CD14-positive monocyte (primary cell): ENCODE measurements at regions of chr16 and their contacts with region 1.

Region 1: GRCh38 chr16:636206-637080 is at the start of gene METTL26:
- DNase-seq: peak; percentile 93
- H3K4me3 ChIP-seq: peak within 1 kb of the TSS; percentile 70 to 96 (median 89)
- H3K4me3 Mint-ChIP-seq: peak within 1 kb of the TSS; percentile 95 to 97
- H3K27ac ChIP-seq: peak within 1 kb of the TSS; percentile 87 to 95
- H3K27ac Mint-ChIP-seq: peak within 1 kb of the TSS; percentile 94 to 99 (median 98)
- H3K4me1 ChIP-seq: peaks cover 30 to 38% of the 10 kb centered on the region in 2 donors
- H3K4me1 Mint-ChIP-seq: peaks cover 14% of the 10 kb centered on the region
- H3K27me3 ChIP-seq: no peaks in the 10 kb centered on the region
- H3K27me3 Mint-ChIP-seq: peaks cover 3 to 6% (median 3%) of the 10 kb centered on the region in 3 donors
- CTCF ChIP-seq: peak; percentile 18
- polyA plus RNA-seq, gene METTL26: 57.1 to 80.9 (median 70.4) TPM

Region 2: GRCh38 chr16:527006-527753 is 109.3 kb before region 1 on chr16 and contains the start of gene CAPN15:
- intact Hi-C with region 1: loop called (anchors 5 kb)
- DNase-seq: peak; percentile 78 to 83 (median 81)
- H3K4me3 ChIP-seq: peak within 1 kb of the TSS; percentile 52 to 91 (median 76)
- H3K4me3 Mint-ChIP-seq: peak within 1 kb of the TSS; percentile 88 to 92
- H3K27ac ChIP-seq: peak within 1 kb of the TSS; percentile 60 to 92
- H3K27ac Mint-ChIP-seq: peak within 1 kb of the TSS; percentile 83 to 94 (median 86)
- H3K4me1 ChIP-seq: peaks cover 29 to 43% of the 10 kb centered on the region in 2 donors
- H3K4me1 Mint-ChIP-seq: peaks cover 39% of the 10 kb centered on the region
- H3K27me3 ChIP-seq: no peaks in the 10 kb centered on the region
- H3K27me3 Mint-ChIP-seq: peaks cover 0 to 2% (median 1%) of the 10 kb centered on the region in 3 donors
- CTCF ChIP-seq: no peak
- polyA plus RNA-seq, gene CAPN15: 3.4 to 42.6 (median 3.9) TPM

Region 3: DNA sequence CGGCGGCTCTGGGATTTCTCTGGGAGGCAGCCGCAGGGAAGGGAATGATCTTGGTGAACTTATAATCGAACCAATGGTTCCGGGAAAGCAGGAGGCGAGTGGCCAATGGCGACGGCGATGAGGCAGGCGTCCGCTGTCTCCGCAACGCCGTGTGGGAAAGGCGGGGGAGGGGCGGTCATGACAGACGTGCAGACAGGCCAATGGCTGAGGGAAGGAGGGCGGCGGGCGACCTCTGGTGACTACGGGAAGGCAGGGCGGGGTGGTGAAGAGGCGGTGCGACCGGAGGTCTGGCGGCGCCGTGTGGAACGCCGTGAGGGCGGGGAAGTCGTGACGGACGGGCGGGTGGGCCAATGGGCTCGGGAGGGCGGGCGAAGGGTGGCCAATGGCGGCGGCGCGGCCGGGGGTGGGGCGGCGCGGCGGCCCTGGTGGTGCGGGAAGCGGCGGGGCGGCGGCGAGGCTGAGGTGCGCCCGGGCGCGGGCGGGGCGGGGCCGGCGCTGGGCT is 46.7 kb before region 1 on chr16 and contains the start of gene RAB40C:
- intact Hi-C with region 1: loop called (anchors 2 kb)
- DNase-seq: peak; percentile 96 to 100 (median 99)
- H3K4me3 ChIP-seq: peak within 1 kb of the TSS; percentile 85 to 92 (median 86)
- H3K4me3 Mint-ChIP-seq: peak within 1 kb of the TSS; percentile 91 to 99
- H3K27ac ChIP-seq: peak within 1 kb of the TSS; percentile 86 to 91
- H3K27ac Mint-ChIP-seq: peak within 1 kb of the TSS; percentile 98 to 100 (median 99)
- H3K4me1 ChIP-seq: peaks cover 58 to 63% of the 10 kb centered on the region in 2 donors
- H3K4me1 Mint-ChIP-seq: peaks cover 54% of the 10 kb centered on the region
- H3K27me3 ChIP-seq: peaks cover 0 to 7% of the 10 kb centered on the region in 2 donors
- H3K27me3 Mint-ChIP-seq: peaks cover 3 to 15% (median 12%) of the 10 kb centered on the region in 3 donors
- CTCF ChIP-seq: no peak
- polyA plus RNA-seq, gene RAB40C: 10.0 to 22.6 (median 10.9) TPM

Region 4: GRCh38 chr16:660459-661183 is 24.2 kb after region 1 on chr16:
- intact Hi-C with region 1: loop called (anchors 2 kb)
- DNase-seq: peak; percentile 91 to 94 (median 93)
- H3K4me3 ChIP-seq: peak overlapping the region; percentile 4 to 65 (median 27)
- H3K4me3 Mint-ChIP-seq: peak overlapping the region; percentile 65 to 73
- H3K27ac ChIP-seq: peak overlapping the region in 1 of 2 donors; percentile 40
- H3K27ac Mint-ChIP-seq: peak overlapping the region in 3 of 7 donors; percentile 8 to 30 (median 24)
- H3K4me1 ChIP-seq: peaks cover 11 to 16% of the 10 kb centered on the region in 2 donors
- H3K4me1 Mint-ChIP-seq: peaks cover 10% of the 10 kb centered on the region
- H3K27me3 ChIP-seq: no peaks in the 10 kb centered on the region
- H3K27me3 Mint-ChIP-seq: peaks cover 0 to 3% (median 2%) of the 10 kb centered on the region in 3 donors
- CTCF ChIP-seq: peak; percentile 72

Region 5: GRCh38 chr16:684067-684794 is 47.8 kb after region 1 on chr16 and contains the start of gene JMJD8:
- intact Hi-C with region 1: loop called in 1 of 2 experiments (anchors 5 kb)
- DNase-seq: peak; percentile 94 to 97 (median 97)
- H3K4me3 ChIP-seq: peak within 1 kb of the TSS; percentile 41 to 78 (median 52)
- H3K4me3 Mint-ChIP-seq: peak within 1 kb of the TSS; percentile 73 to 79
- H3K27ac ChIP-seq: peak within 1 kb of the TSS; percentile 48 to 69
- H3K27ac Mint-ChIP-seq: peak within 1 kb of the TSS; percentile 54 to 90 (median 88)
- H3K4me1 ChIP-seq: peaks cover 41 to 66% of the 10 kb centered on the region in 2 donors
- H3K4me1 Mint-ChIP-seq: peaks cover 30% of the 10 kb centered on the region
- H3K27me3 ChIP-seq: no peaks in the 10 kb centered on the region
- H3K27me3 Mint-ChIP-seq: peaks cover 0 to 2% (median 0%) of the 10 kb centered on the region in 3 donors
- CTCF ChIP-seq: no peak
- polyA plus RNA-seq, gene JMJD8: 28.7 to 45.3 (median 33.5) TPM